ENCODE measurements at regions of chr12 and their contacts with region 1.

Region 1: GRCh38 chr12:104108755-104109445 is 29.1 kb downstream of the NFYB start:
- DNase-seq: peak; percentile 91
- H3K4me3 Mint-ChIP-seq: no peak overlapping the region
- H3K27ac Mint-ChIP-seq: no peak overlapping the region
- H3K4me1 Mint-ChIP-seq: no peaks in the 10 kb centered on the region
- H3K27me3 Mint-ChIP-seq: no peaks in the 10 kb centered on the region
- CTCF ChIP-seq: peak; percentile 69

Region 2: GRCh38 chr12:103578926-103579325 is 530.0 kb before region 1 on chr12:
- CTCF ChIA-PET with region 1: no interaction called
- intact Hi-C with region 1: loop called (anchors 5 kb)
- DNase-seq: no peak
- H3K4me3 Mint-ChIP-seq: no peak overlapping the region
- H3K27ac Mint-ChIP-seq: no peak overlapping the region
- H3K4me1 Mint-ChIP-seq: peaks cover 8% of the 10 kb centered on the region
- H3K27me3 Mint-ChIP-seq: peaks cover 61% of the 10 kb centered on the region
- CTCF ChIP-seq: no peak

Region 3: GRCh38 chr12:103771466-103771865 is 337.4 kb before region 1 on chr12:
- CTCF ChIA-PET with region 1: no interaction called
- intact Hi-C with region 1: loop called (anchors 10 kb)
- DNase-seq: peak; percentile 75
- H3K4me3 Mint-ChIP-seq: no peak overlapping the region
- H3K27ac Mint-ChIP-seq: peak overlapping the region; percentile 60
- H3K4me1 Mint-ChIP-seq: no peaks in the 10 kb centered on the region
- H3K27me3 Mint-ChIP-seq: no peaks in the 10 kb centered on the region
- CTCF ChIP-seq: peak; percentile 72

Region 4: DNA sequence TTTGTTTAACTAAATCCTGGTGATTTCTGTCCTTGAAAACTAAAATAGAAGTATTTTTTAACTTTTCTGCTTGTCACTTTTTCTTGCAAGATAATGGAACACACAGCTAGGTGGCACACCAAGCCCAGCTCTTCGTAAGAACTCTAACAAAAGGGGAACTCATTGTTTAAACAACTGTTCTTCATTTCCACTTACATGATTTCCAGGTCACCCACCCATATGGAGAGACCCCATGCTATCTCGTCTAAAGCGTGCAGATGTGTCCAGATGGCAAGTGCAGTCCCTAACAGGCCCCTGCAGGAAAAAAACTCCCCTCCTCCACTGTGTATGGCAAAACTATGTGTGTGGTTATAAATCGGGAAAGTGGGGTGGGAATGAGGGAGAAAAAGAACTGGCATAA is 224.6 kb before region 1 on chr12:
- CTCF ChIA-PET with region 1: interaction called, 11 read pairs
- intact Hi-C with region 1: loop called (anchors 1 kb)
- DNase-seq: peak; percentile 30
- H3K4me3 Mint-ChIP-seq: no peak overlapping the region
- H3K27ac Mint-ChIP-seq: no peak overlapping the region
- H3K4me1 Mint-ChIP-seq: peaks cover 21% of the 10 kb centered on the region
- H3K27me3 Mint-ChIP-seq: no peaks in the 10 kb centered on the region
- CTCF ChIP-seq: no peak

Region 5: DNA sequence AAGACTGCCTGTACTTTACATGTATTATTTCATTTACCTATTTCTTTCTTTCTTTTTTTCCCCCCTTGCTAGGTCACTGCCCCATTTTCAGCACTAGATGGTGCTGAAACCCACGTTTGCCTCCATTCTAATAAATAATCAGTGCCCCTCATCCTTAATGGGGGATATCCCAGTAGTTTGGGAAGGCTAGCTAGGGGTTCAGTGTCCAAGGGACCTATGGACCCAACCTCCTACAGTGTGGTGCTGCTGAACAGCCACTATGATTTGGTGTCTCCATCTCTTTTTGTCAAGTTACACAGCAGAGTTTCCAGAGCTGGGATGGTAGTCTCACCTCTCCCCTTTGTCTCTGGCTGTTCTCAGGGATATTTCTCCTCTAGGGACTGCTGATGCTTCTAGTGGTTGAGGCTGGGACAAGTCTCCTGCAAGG is 51.1 kb before region 1 on chr12:
- CTCF ChIA-PET with region 1: interaction called, 19 read pairs
- intact Hi-C with region 1: loop called (anchors 1 kb)
- DNase-seq: no peak
- H3K4me3 Mint-ChIP-seq: no peak overlapping the region
- H3K27ac Mint-ChIP-seq: no peak overlapping the region
- H3K4me1 Mint-ChIP-seq: no peaks in the 10 kb centered on the region
- H3K27me3 Mint-ChIP-seq: peaks cover 72% of the 10 kb centered on the region
- CTCF ChIP-seq: peak; percentile 66

Measured in Calu3 (cell line).